ENCODE measurements at regions of chr13 and their contacts with region 1.

Region 1: DNA sequence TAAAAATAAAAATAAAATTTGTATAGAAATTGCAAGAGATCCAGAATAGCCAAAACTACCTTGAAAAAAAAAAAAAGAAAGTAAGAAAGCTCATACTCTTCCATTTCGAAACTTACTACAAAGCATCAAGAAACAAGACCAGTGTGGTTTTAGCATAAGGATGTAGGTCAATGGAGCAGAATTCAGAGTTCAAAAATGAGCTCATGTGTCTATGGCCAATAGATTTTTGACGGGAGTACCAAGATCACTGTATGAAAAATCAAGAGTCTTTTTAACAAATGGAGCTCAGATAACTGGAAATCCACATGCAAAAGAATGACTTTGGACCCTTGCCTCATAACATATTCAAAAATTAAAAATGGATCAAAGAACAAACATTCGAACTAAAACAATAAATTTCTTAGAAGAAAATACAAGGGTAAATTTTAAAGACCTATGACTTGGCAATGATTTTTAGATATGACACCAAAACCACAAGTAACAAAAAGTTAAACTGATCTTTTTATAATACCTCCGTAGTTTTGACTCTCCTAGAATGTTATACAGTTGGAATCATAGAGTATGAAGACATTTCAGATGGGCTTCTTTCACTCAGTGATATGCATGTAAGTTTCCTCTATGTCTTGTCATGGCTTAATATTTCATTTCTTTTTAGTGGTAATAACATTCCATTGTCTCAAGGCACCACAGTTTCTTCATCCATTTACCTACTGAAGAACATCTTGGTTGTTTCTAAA is 43.2 kb downstream of the KLF12 start:
- DNase-seq: peak in 1 of 35 experiments; percentile 46
- ATAC-seq: peak in 2 of 4 experiments; percentile 52 to 65
- H3K4me3 ChIP-seq: no peak overlapping the region
- H3K4me3 Mint-ChIP-seq: peak overlapping the region; percentile 32 to 39 (median 38)
- H3K27ac ChIP-seq: peak overlapping the region; percentile 40
- H3K27ac Mint-ChIP-seq: peak overlapping the region; percentile 88 to 89
- H3K4me1 ChIP-seq: peaks cover 19 to 34% of the 10 kb centered on the region in 2 experiments
- H3K4me1 Mint-ChIP-seq: peaks cover 79 to 80% (median 80%) of the 10 kb centered on the region in 3 donors
- H3K27me3 ChIP-seq: no peaks in the 10 kb centered on the region
- H3K27me3 Mint-ChIP-seq: no peaks in the 10 kb centered on the region

Region 2: GRCh38 chr13:74367193-74367592 is 276.2 kb after region 1 on chr13:
- CTCF ChIA-PET with region 1: no interaction called
- POLR2A ChIA-PET with region 1: no interaction called
- DNase-seq: peak in 1 of 35 experiments; percentile 16
- ATAC-seq: peak in 2 of 4 experiments; percentile 28 to 63
- H3K4me3 ChIP-seq: no peak overlapping the region
- H3K4me3 Mint-ChIP-seq: no peak overlapping the region
- H3K27ac ChIP-seq: no peak overlapping the region
- H3K27ac Mint-ChIP-seq: no peak overlapping the region
- H3K4me1 ChIP-seq: no peaks in the 10 kb centered on the region
- H3K4me1 Mint-ChIP-seq: peaks cover 0 to 14% (median 5%) of the 10 kb centered on the region in 3 donors
- H3K27me3 ChIP-seq: no peaks in the 10 kb centered on the region
- H3K27me3 Mint-ChIP-seq: peaks cover 0 to under 1% of the 10 kb centered on the region in 2 donors

Region 3: DNA sequence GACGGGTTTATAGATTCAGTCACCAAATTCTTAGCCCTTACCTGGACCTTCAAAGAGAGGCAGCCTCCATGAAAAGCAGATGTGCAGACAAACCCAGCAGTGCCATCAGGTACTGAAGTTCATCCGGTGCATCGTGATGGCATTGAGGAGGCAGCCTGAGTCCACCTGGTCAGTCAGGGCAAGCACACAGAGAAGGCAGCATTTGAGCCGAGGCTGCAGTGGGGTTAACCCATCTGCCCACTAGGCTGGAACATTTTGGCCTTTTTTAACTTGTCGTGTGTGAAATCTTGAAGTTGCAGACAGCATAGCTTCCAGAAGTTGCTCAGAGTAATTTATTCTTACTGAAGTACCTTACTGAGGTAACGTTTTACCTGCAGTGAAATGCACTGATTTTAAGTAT is 1550.0 kb after region 1 on chr13:
- CTCF ChIA-PET with region 1: no interaction called
- POLR2A ChIA-PET with region 1: interaction called in 1 of 2 experiments, 10 read pairs
- DNase-seq: no peak
- ATAC-seq: no peak
- H3K4me3 ChIP-seq: no peak overlapping the region
- H3K4me3 Mint-ChIP-seq: no peak overlapping the region
- H3K27ac ChIP-seq: no peak overlapping the region
- H3K27ac Mint-ChIP-seq: no peak overlapping the region
- H3K4me1 ChIP-seq: peaks cover 10 to 13% of the 10 kb centered on the region in 2 experiments
- H3K4me1 Mint-ChIP-seq: peaks cover 10 to 16% (median 13%) of the 10 kb centered on the region in 3 donors
- H3K27me3 ChIP-seq: no peaks in the 10 kb centered on the region
- H3K27me3 Mint-ChIP-seq: peaks cover 5 to 6% of the 10 kb centered on the region in 2 donors